PC-3 (cell line): ENCODE measurements at regions of chr2 and their contacts with region 1.

Region 1: GRCh38 chr2:176096986-176097819 is 2.4 kb upstream of the HOXD12 start:
- DNase-seq: peak; percentile 80
- ATAC-seq: peak; percentile 86
- H3K4me3 ChIP-seq: peak overlapping the region; percentile 88
- H3K27ac ChIP-seq: no peak overlapping the region
- H3K4me1 ChIP-seq: peaks cover 5% of the 10 kb centered on the region; the same call in 1 of the 2 replicates
- H3K27me3 ChIP-seq: 0 out of 2 replicates have a peak, but pooled peaks cover 3% of the 10 kb centered on the region
- CTCF ChIP-seq: peak; percentile 90

Region 2: DNA sequence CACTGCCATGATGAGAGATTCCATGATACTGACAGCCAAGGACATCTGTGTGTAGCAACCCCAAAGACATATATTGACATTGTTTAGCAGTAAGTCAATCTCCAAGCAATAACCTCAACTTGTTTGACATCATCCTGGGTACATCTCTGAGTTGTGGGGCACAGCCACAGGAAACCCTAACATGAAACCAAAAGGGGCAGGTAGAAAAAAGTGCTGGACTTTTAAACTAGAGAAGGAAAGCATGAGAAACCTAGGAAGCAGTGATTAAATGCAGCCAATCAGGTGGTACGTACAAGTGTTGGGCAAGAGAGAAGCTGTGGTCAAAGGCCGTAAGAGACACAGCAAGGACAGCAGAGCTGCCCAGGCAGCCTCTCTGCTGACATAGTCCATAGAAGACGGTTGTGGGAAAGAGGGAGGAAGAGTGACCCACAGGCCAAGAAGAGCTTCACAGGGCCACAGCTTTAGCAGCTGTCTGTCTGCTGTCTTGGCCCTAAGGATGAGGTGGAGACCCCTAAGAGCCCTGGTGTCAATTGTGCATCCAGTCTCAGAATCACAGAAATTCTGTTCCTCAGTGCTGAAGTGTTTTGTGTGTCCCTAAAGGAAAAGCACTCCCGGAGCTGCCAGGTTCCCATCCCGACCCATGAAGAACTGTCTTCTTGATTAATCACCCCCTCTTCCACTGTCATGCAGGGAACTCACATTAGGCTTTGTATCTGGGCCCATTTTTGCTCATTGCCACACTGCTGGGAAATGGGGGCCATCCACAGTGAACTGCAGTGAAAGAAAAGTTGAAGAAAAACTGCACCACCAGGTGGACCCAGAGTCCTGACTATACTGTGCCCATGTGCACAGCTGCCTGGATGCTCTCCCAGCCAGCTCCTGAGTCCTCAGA is 1066.6 kb before region 1 on chr2:
- CTCF ChIA-PET with region 1: no interaction called
- POLR2A ChIA-PET with region 1: no interaction called
- intact Hi-C with region 1: loop called (anchors 10 kb)
- DNase-seq: peak; percentile 69
- ATAC-seq: peak; percentile 97
- H3K4me3 ChIP-seq: no peak overlapping the region
- H3K27ac ChIP-seq: no peak overlapping the region
- H3K4me1 ChIP-seq: peaks cover 7% of the 10 kb centered on the region; the same call in 1 of the 2 replicates
- H3K27me3 ChIP-seq: no peaks in the 10 kb centered on the region
- CTCF ChIP-seq: peak; percentile 66

Region 3: DNA sequence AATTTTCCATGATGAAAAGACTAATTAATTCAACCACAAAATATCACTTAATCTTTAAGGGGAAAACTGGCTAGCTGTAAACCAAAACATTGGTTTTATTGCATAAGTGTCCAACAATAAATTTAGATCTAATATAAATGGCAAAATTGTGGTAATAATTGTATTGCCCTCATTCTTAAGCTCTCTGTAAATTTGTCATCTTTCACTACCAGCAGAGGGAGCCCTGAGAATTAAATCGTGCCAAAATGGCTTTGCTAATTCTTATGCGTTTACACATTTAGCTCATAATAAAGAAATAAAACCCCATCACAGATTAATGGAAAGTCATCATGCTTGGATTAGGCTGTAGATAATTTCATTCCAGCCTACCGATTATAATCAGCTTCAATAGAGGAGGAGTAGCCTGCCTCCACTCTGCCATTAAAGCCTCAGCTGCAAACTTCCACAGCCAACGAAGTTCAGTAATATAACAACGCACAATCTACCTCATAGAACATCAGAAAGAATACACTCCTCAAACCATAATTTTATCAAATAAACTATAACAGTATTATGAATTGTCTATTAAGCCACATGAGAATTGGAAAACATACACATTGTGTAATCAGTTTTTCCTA is 845.7 kb before region 1 on chr2:
- CTCF ChIA-PET with region 1: interaction called, 9 read pairs
- POLR2A ChIA-PET with region 1: no interaction called
- intact Hi-C with region 1: loop called (anchors 1 kb)
- DNase-seq: peak; percentile 71
- ATAC-seq: peak; percentile 65
- H3K4me3 ChIP-seq: no peak overlapping the region
- H3K27ac ChIP-seq: no peak overlapping the region
- H3K4me1 ChIP-seq: no peaks in the 10 kb centered on the region
- H3K27me3 ChIP-seq: peaks cover 21% of the 10 kb centered on the region
- CTCF ChIP-seq: peak; percentile 82

Region 4: GRCh38 chr2:175309799-175310198 is 787.4 kb before region 1 on chr2:
- CTCF ChIA-PET with region 1: no interaction called
- POLR2A ChIA-PET with region 1: no interaction called
- intact Hi-C with region 1: loop called (anchors 2 kb)
- DNase-seq: peak; percentile 50
- ATAC-seq: peak; percentile 81
- H3K4me3 ChIP-seq: no peak overlapping the region
- H3K27ac ChIP-seq: no peak overlapping the region
- H3K4me1 ChIP-seq: no peaks in the 10 kb centered on the region
- H3K27me3 ChIP-seq: peaks cover 66% of the 10 kb centered on the region
- CTCF ChIP-seq: peak; percentile 76

Region 5: DNA sequence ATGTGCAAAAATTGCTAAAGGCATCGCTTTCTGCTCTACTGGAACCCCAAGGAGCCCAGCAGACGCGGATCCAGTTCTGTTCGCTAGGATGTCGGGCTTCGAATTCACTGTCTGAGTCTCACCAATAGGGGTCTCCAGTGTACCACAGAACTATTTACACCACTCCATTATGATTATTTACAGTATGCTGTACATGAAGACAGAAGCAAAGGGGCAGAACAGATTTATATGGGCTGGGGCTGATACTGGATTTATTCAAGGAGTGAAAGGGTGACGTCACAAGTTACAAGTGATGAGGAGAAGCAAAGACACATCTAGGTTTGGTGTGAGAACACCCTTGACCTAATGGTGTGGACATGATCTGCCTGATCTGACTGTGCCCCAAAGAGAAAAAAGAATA is 730.4 kb before region 1 on chr2:
- CTCF ChIA-PET with region 1: no interaction called
- POLR2A ChIA-PET with region 1: no interaction called
- intact Hi-C with region 1: loop called (anchors 1 kb)
- DNase-seq: peak; percentile 72
- ATAC-seq: peak; percentile 83
- H3K4me3 ChIP-seq: no peak overlapping the region
- H3K27ac ChIP-seq: no peak overlapping the region
- H3K4me1 ChIP-seq: peaks cover 8% of the 10 kb centered on the region
- H3K27me3 ChIP-seq: peaks cover 36% of the 10 kb centered on the region
- CTCF ChIP-seq: peak; percentile 90

Region 6: GRCh38 chr2:175414882-175415487 is 682.2 kb before region 1 on chr2:
- CTCF ChIA-PET with region 1: no interaction called
- POLR2A ChIA-PET with region 1: no interaction called
- intact Hi-C with region 1: loop called (anchors 1 kb)
- DNase-seq: peak; percentile 72
- ATAC-seq: peak; percentile 92
- H3K4me3 ChIP-seq: no peak overlapping the region
- H3K27ac ChIP-seq: no peak overlapping the region
- H3K4me1 ChIP-seq: no peaks in the 10 kb centered on the region
- H3K27me3 ChIP-seq: peaks cover 7% of the 10 kb centered on the region; the same call in 1 of the 2 replicates
- CTCF ChIP-seq: peak; percentile 82

Region 7: DNA sequence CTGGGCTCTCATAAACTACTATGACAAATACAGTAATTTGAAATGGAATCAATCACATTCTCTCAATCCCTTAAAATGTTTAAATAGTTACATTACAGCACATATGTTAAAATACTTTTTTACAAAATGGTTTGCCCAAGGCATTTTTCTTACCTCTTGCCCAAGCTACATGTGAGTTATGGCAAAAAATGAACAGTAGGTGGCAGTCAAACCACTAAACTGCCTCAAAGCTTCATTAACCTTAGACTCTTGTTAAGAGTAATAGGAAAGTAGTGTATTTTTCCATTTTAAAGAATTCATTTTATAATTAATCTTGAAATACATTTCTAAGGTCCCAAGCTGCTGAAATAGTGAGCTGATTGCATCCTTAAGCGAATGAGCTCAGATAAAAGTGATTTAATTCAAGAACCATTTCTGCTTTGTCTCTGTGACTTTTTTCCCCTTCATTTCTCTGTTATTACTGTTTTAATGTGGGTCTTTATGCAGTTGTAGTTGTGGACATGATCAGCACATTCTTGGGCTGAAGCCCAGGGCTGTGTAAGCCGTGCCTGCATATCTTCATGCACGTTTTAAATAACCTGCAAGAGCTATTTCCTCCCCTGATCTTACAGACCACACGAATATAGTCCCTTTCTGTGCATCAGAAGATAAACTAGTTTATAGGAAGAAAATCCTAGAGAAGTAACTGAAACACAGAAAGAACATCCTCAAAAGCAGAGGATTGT is 406.9 kb before region 1 on chr2:
- CTCF ChIA-PET with region 1: interaction called, 12 read pairs
- POLR2A ChIA-PET with region 1: no interaction called
- intact Hi-C with region 1: loop called (anchors 2 kb)
- DNase-seq: peak; percentile 86
- ATAC-seq: peak; percentile 82
- H3K4me3 ChIP-seq: no peak overlapping the region
- H3K27ac ChIP-seq: no peak overlapping the region
- H3K4me1 ChIP-seq: no peaks in the 10 kb centered on the region
- H3K27me3 ChIP-seq: peaks cover 42% of the 10 kb centered on the region
- CTCF ChIP-seq: peak; percentile 74

Region 8: DNA sequence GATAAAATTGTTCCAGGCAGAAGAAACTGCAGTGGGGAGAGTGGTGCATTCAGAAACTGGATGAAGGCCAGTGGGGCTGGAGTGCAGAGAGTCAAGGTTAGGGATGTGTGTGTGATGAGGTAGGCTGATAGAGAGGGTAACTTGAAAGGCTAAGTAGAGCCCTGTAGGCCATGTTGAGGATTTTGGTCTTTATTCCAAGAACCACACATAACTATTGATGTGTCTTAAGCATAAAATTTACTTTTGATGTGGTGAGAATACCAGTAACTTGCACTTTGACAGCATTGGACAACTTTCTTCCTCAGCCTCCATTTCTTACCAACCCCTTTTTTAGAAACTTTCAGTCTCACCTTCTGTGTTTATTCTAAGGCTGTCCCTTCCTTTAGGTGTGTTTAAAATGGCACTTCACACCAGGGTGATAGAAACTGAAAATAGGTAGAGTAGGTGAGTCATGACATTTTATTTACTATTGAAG is 194.6 kb after region 1 on chr2:
- CTCF ChIA-PET with region 1: no interaction called
- POLR2A ChIA-PET with region 1: no interaction called
- intact Hi-C with region 1: no loop called
- DNase-seq: peak; percentile 50
- ATAC-seq: peak; percentile 93
- H3K4me3 ChIP-seq: no peak overlapping the region
- H3K27ac ChIP-seq: peak overlapping the region; percentile 14; the same call in 1 of the 2 replicates
- H3K4me1 ChIP-seq: peaks cover 19% of the 10 kb centered on the region
- H3K27me3 ChIP-seq: no peaks in the 10 kb centered on the region
- CTCF ChIP-seq: no peak